H1 (cell line): ENCODE measurements at regions of chr4 and their contacts with region 1.

Region 1: GRCh38 chr4:67909905-67910584 is 26.2 kb upstream of the TMPRSS11D start:
- DNase-seq: no peak
- H3K4me3 ChIP-seq: no peak overlapping the region
- H3K27ac ChIP-seq: no peak overlapping the region
- H3K4me1 ChIP-seq: no peaks in the 10 kb centered on the region
- H3K27me3 ChIP-seq: no peaks in the 10 kb centered on the region
- CTCF ChIP-seq: peak in 2 of 3 experiments; percentile 21 to 28; a peak in 2 of 4 replicates
- EP300 ChIP-seq: no peak
- POLR2A ChIP-seq: no peak
- RAD21 ChIP-seq: peak; percentile 17 to 37; a peak in 3 of 4 replicates

Region 2: GRCh38 chr4:67885762-67886161 is 24.3 kb before region 1 on chr4:
- CTCF ChIA-PET with region 1: interaction called, 10 read pairs
- POLR2A ChIA-PET with region 1: no interaction called
- DNase-seq: peak in 1 of 2 experiments; percentile 23
- H3K4me3 ChIP-seq: no peak overlapping the region
- H3K27ac ChIP-seq: no peak overlapping the region
- H3K4me1 ChIP-seq: peaks cover 0 to 2% (median 0%) of the 10 kb centered on the region in 4 experiments; a peak in 2 of 7 replicates
- H3K27me3 ChIP-seq: no peaks in the 10 kb centered on the region
- CTCF ChIP-seq: no peak
- EP300 ChIP-seq: no peak
- POLR2A ChIP-seq: no peak
- RAD21 ChIP-seq: no peak

Region 3: DNA sequence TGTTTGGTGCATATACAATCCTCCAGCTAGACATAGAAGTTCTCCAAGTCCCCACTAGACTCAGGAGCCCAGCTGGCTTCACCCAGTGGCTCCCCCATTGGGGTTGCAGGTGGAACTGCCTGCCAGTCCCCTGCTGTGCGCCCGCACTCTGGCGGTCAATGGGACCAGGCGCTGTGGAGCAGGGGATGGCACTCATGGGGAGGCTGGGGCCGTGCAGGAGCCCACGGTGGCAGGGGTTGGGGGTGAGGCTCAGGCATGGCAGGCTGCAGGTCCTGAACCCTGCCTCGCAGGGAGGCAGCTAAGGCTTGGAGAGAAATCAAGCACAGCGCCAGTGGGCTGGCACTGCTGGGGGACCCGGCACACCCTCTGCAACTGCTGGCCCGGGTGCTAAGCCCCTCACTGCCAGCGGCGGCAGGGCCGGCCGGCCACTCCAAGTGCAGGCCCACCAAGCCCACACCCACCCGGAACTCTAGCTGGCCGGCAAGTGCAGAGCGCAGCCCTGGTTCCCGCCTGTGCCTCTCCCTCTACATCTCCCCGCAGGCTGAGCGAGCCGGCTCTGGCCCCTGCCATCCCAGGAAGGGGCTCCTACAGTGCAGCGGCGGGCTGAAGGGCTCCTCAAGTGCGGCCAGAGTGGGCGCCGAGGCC is 13.5 kb before region 1 on chr4:
- CTCF ChIA-PET with region 1: interaction called, 56 read pairs
- POLR2A ChIA-PET with region 1: interaction called, 3 read pairs
- DNase-seq: no peak
- H3K4me3 ChIP-seq: no peak overlapping the region
- H3K27ac ChIP-seq: no peak overlapping the region
- H3K4me1 ChIP-seq: no peaks in the 10 kb centered on the region; a peak in 1 of 7 replicates
- H3K27me3 ChIP-seq: peaks cover 0 to 1% (median 0%) of the 10 kb centered on the region in 4 experiments; a peak in 1 of 7 replicates
- CTCF ChIP-seq: 0 out of 4 replicates have a peak, but pooled peaks of 1 of the 3 experiments have one; percentile 6
- EP300 ChIP-seq: no peak
- POLR2A ChIP-seq: no peak
- RAD21 ChIP-seq: no peak

Region 4: DNA sequence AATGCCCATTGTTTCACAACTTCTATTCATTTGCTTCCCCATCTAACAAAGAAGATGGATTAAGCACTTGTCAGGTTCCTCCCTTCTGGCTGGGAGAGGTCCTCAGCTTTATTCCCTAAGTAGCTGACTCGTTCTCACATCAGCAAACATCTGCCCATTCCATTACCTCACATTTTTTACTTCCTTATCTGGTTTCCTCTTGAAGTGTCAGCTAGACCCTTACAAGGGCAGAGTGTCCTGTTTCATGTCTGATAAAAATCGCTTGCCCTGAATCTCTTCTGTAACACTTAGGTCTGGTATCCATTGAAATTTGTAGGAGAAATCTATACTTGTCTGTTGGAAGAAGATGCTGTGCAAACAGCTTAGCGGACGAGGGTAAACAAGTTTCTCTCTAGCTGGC is 18.5 kb after region 1 on chr4:
- CTCF ChIA-PET with region 1: interaction called, 40 read pairs
- POLR2A ChIA-PET with region 1: no interaction called
- DNase-seq: no peak
- H3K4me3 ChIP-seq: no peak overlapping the region
- H3K27ac ChIP-seq: no peak overlapping the region
- H3K4me1 ChIP-seq: no peaks in the 10 kb centered on the region
- H3K27me3 ChIP-seq: no peaks in the 10 kb centered on the region
- CTCF ChIP-seq: no peak
- EP300 ChIP-seq: no peak
- POLR2A ChIP-seq: no peak
- RAD21 ChIP-seq: no peak

Region 5: DNA sequence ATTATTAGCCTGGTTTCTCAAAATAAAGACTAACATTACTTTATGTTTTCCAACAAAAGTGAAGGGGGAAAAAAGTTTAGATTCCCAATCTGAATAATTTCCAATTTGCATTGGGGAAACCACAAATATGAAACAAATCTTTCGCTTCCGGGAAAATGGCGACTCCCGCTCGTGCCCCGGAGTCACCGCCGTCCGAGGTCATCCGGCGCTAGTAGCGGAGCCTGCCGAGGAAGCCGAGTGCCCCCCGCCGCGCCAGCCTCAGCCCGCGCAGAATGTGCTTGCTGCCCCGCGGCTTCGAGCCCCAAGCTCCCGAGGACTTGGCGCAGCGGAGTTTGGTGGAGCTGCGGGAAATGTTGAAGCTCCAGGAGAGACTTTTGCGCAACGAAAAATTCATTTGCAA is 128.2 kb after region 1 on chr4:
- CTCF ChIA-PET with region 1: no interaction called
- POLR2A ChIA-PET with region 1: no interaction called
- DNase-seq: no peak
- H3K4me3 ChIP-seq: no peak overlapping the region
- H3K27ac ChIP-seq: no peak overlapping the region
- H3K4me1 ChIP-seq: no peaks in the 10 kb centered on the region
- H3K27me3 ChIP-seq: no peaks in the 10 kb centered on the region
- CTCF ChIP-seq: no peak
- EP300 ChIP-seq: no peak
- POLR2A ChIP-seq: no peak
- RAD21 ChIP-seq: no peak